Ascending aorta (tissue), 2 donors: ENCODE measurements at regions of chr1 and their contacts with region 1.

Region 1: GRCh38 chr1:65059930-65060538 is 88.0 kb upstream of the AK4 start:
- DNase-seq: no peak
- H3K4me3 ChIP-seq: no peak overlapping the region
- H3K27ac ChIP-seq: peak overlapping the region; percentile 10 to 35
- H3K4me1 ChIP-seq: peaks cover 3 to 22% of the 10 kb centered on the region in 2 donors
- H3K27me3 ChIP-seq: no peaks in the 10 kb centered on the region
- CTCF ChIP-seq: peak; percentile 64 to 70 (median 67)

Region 2: GRCh38 chr1:65075123-65075976 is 15.3 kb after region 1 on chr1:
- intact Hi-C with region 1: loop called (anchors 2 kb)
- DNase-seq: peak in 1 of 2 donors; percentile 71
- H3K4me3 ChIP-seq: no peak overlapping the region
- H3K27ac ChIP-seq: no peak overlapping the region
- H3K4me1 ChIP-seq: no peaks in the 10 kb centered on the region
- H3K27me3 ChIP-seq: no peaks in the 10 kb centered on the region
- CTCF ChIP-seq: peak; percentile 41 to 75 (median 65)